CD8-positive, alpha-beta T cell (primary cell): ENCODE measurements at regions of chr1 and their contacts with region 1.

Region 1: GRCh38 chr1:150363426-150364230 is at the start of gene RPRD2:
- DNase-seq: peak; percentile 97 to 100 (median 98)
- ATAC-seq: peak; percentile 95
- H3K4me3 ChIP-seq: peak within 1 kb of the TSS; percentile 69 to 90
- H3K4me3 Mint-ChIP-seq: peak within 1 kb of the TSS; percentile 99
- H3K27ac ChIP-seq: peak within 1 kb of the TSS; percentile 74 to 94
- H3K27ac Mint-ChIP-seq: peak within 1 kb of the TSS; percentile 99
- H3K4me1 ChIP-seq: peaks cover 7% of the 10 kb centered on the region
- H3K4me1 Mint-ChIP-seq: peaks cover 36% of the 10 kb centered on the region
- H3K27me3 ChIP-seq: no peaks in the 10 kb centered on the region
- H3K27me3 Mint-ChIP-seq: no peaks in the 10 kb centered on the region
- CTCF ChIP-seq: no peak
- total RNA-seq, gene RPRD2: 31.8 to 35.0 TPM

Region 2: GRCh38 chr1:150213170-150214098 is 150.2 kb before region 1 on chr1:
- CTCF ChIA-PET with region 1: no interaction called
- POLR2A ChIA-PET with region 1: no interaction called
- intact Hi-C with region 1: loop called in 1 of 2 experiments (anchors 5 kb)
- DNase-seq: peak; percentile 82 to 96 (median 92)
- ATAC-seq: peak; percentile 99
- H3K4me3 ChIP-seq: peak overlapping the region; percentile 54 to 62
- H3K4me3 Mint-ChIP-seq: peak overlapping the region; percentile 93
- H3K27ac ChIP-seq: peak overlapping the region; percentile 70 to 74
- H3K27ac Mint-ChIP-seq: peak overlapping the region; percentile 98
- H3K4me1 ChIP-seq: peaks cover 9% of the 10 kb centered on the region
- H3K4me1 Mint-ChIP-seq: peaks cover 13% of the 10 kb centered on the region
- H3K27me3 ChIP-seq: no peaks in the 10 kb centered on the region
- H3K27me3 Mint-ChIP-seq: no peaks in the 10 kb centered on the region
- CTCF ChIP-seq: peak; percentile 54

Region 3: DNA sequence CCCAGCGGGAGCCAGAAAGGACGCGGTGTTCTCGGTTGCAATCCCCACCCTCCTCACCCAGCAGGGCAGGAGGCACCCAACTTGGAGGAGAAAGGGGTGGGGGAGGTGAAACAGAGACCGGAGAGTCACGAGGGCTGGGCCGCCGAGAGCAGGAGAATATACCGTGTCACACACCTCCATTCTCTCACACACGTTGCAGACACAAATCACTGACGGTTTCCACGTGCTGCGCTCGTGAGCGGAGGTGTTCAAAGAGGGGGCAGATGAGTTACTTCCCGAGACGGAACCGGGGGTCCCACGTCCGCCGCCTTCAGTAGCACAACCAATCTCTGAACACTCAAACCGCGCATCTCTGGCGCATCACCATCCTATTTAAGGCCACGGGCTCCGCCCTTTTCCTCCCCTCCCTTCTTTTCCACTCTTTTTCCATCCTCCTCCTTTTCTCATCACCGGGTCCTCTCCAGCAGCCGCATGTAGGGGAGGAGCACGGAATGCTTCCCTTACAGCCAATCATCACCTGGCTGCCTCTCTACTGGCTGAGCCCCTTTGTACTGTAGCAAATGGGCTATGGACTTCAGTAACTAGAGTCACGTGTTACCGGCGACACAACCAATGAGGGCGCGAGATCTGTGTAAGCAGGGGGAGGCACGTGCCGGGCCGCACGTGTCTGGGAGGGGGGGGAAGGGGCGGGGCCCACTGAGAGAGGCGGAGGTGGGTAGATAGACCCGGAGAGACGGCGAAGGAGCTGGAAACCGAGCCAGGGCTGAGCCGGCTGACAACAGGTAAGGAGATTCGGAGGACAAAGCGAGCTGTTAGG is 81.6 kb before region 1 on chr1 and contains the start of gene CIART:
- CTCF ChIA-PET with region 1: no interaction called
- POLR2A ChIA-PET with region 1: no interaction called
- intact Hi-C with region 1: no loop called
- DNase-seq: peak; percentile 45 to 92 (median 74)
- ATAC-seq: peak; percentile 76
- H3K4me3 ChIP-seq: peak within 1 kb of the TSS; percentile 56 to 57
- H3K4me3 Mint-ChIP-seq: peak within 1 kb of the TSS; percentile 83
- H3K27ac ChIP-seq: peak within 1 kb of the TSS; percentile 17 to 44
- H3K27ac Mint-ChIP-seq: peak within 1 kb of the TSS; percentile 89
- H3K4me1 ChIP-seq: peaks cover 24% of the 10 kb centered on the region
- H3K4me1 Mint-ChIP-seq: peaks cover 21% of the 10 kb centered on the region
- H3K27me3 ChIP-seq: no peaks in the 10 kb centered on the region
- H3K27me3 Mint-ChIP-seq: no peaks in the 10 kb centered on the region
- CTCF ChIP-seq: no peak
- total RNA-seq, gene CIART: 2.0 to 2.3 TPM

Region 4: GRCh38 chr1:150293433-150294168 is 70.0 kb before region 1 on chr1 and contains the start of gene MRPS21:
- CTCF ChIA-PET with region 1: no interaction called
- POLR2A ChIA-PET with region 1: no interaction called
- intact Hi-C with region 1: loop called in 1 of 2 experiments (anchors 2 kb)
- DNase-seq: peak; percentile 75 to 96 (median 84)
- ATAC-seq: peak; percentile 94
- H3K4me3 ChIP-seq: peak within 1 kb of the TSS; percentile 72 to 79
- H3K4me3 Mint-ChIP-seq: peak within 1 kb of the TSS; percentile 91
- H3K27ac ChIP-seq: peak within 1 kb of the TSS; percentile 96 to 98
- H3K27ac Mint-ChIP-seq: peak within 1 kb of the TSS; percentile 94
- H3K4me1 ChIP-seq: peaks cover 15% of the 10 kb centered on the region
- H3K4me1 Mint-ChIP-seq: peaks cover 35% of the 10 kb centered on the region
- H3K27me3 ChIP-seq: no peaks in the 10 kb centered on the region
- H3K27me3 Mint-ChIP-seq: no peaks in the 10 kb centered on the region
- CTCF ChIP-seq: no peak
- total RNA-seq, gene MRPS21: 41.6 to 43.9 TPM

Region 5: DNA sequence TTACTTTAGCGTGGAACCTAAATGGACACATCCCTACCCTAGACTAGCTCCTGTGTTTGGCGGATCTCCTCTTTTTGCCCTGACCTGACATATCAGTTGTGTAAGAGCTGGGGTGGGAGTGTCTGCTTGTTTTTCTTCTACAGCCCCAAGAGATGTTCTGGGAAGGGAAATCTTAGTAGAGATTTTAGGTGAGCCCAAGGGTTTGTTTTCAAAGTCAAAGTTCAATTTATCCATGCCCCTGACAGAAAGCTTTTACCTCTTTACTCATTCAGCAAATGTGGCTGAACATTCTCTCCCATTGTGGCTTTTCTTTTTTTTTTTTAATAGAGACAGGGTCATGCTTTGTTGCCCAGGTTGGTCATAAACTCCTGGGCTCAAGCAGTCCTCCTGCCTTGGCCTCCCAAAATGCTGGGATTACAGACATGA is 116.3 kb after region 1 on chr1:
- CTCF ChIA-PET with region 1: no interaction called
- POLR2A ChIA-PET with region 1: no interaction called
- intact Hi-C with region 1: no loop called
- DNase-seq: no peak
- ATAC-seq: no peak
- H3K4me3 ChIP-seq: no peak overlapping the region
- H3K4me3 Mint-ChIP-seq: no peak overlapping the region
- H3K27ac ChIP-seq: no peak overlapping the region
- H3K27ac Mint-ChIP-seq: peak overlapping the region; percentile 10
- H3K4me1 ChIP-seq: no peaks in the 10 kb centered on the region
- H3K4me1 Mint-ChIP-seq: peaks cover 11% of the 10 kb centered on the region
- H3K27me3 ChIP-seq: no peaks in the 10 kb centered on the region
- H3K27me3 Mint-ChIP-seq: no peaks in the 10 kb centered on the region
- CTCF ChIP-seq: no peak

Region 6: DNA sequence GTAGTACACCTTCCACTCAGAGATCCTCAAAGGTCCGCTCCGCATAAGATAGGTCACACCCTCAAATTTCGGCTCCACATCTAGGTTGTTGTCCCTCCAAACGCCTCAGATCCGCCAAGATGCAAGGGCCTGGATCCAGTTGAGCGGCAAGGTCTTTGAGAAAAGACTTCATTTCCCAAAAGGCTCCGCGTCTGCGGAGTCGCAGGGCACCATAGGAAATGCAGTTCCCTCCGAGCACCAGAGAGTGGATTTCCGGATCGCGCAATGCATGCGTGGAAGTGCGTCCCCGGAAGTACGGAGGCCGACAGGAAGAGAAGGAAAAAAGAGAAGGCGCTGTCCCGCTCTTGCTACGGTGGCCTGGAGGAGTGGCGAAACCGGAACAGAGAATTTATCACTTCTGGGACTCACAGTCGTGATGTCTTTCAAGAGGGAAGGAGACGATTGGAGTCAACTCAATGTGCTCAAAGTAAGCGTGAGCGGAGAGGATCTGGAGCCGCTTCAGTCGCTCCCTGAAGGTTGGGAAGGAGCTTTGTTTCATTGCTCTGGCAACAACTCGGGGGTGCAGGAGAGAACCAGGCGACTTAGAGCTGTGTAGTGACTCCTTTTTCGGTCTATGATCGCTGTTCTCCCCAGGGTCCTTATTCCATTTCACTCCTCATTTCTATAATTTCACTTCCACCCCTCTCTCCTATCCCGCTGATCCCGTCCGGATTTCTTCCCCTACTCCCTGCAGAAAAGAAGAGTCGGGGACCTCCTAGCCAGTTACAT is 802.3 kb after region 1 on chr1 and contains the starts of genes LYSMD1 and SCNM1:
- CTCF ChIA-PET with region 1: no interaction called
- POLR2A ChIA-PET with region 1: no interaction called
- intact Hi-C with region 1: loop called in 1 of 2 experiments (anchors 5 kb)
- DNase-seq: peak; percentile 91 to 99 (median 95)
- ATAC-seq: peak; percentile 96
- H3K4me3 ChIP-seq: peak within 1 kb of the TSS; percentile 82 to 94
- H3K4me3 Mint-ChIP-seq: peak within 1 kb of the TSS; percentile 95
- H3K27ac ChIP-seq: peak within 1 kb of the TSS; percentile 72 to 77
- H3K27ac Mint-ChIP-seq: peak within 1 kb of the TSS; percentile 94
- H3K4me1 ChIP-seq: peaks cover 29% of the 10 kb centered on the region
- H3K4me1 Mint-ChIP-seq: peaks cover 50% of the 10 kb centered on the region
- H3K27me3 ChIP-seq: no peaks in the 10 kb centered on the region
- H3K27me3 Mint-ChIP-seq: no peaks in the 10 kb centered on the region
- CTCF ChIP-seq: no peak
- total RNA-seq, gene LYSMD1: 0.49 to 0.94 TPM
- total RNA-seq, gene SCNM1: 35.0 to 40.4 TPM